Activated T-helper 1 cell treated with anti-CD3 and anti-CD28 coated beads, Interleukin-12 subunit alpha, Interleukin-12 subunit beta, Interleukin-2, Interleukin-4 antibody, amounts not matched to agents 30 ng/mL and 10 ng/mL and 1 ng/mL, durations not matched to agents 14 hours and 24 hours and 36 hours (primary cell): ENCODE measurements at regions of chr13 and their contacts with region 1.

Region 1: DNA sequence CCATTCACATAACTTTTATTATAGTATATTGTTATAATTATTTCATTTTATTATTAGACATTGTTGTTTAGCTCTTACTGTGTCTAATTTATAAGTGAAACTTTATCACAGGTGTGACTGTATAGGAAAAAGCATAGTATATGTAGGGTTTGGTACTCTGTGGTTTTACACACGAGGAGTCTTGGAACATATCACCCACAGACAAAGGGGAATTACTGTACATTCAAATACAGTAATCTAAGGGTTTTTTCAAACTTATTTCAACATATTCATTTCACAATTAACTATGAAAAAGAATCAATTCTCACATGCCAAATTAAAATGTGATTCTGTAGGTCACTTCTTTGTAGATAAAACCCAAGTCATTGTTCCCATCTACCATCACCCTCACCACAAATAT is 46.0 kb downstream of the RBM26 start:
- DNase-seq: no peak
- H3K4me3 Mint-ChIP-seq: no peak overlapping the region
- H3K27ac Mint-ChIP-seq: peak overlapping the region; percentile 57
- H3K4me1 Mint-ChIP-seq: peaks cover 34% of the 10 kb centered on the region
- H3K27me3 Mint-ChIP-seq: no peaks in the 10 kb centered on the region

Region 2: DNA sequence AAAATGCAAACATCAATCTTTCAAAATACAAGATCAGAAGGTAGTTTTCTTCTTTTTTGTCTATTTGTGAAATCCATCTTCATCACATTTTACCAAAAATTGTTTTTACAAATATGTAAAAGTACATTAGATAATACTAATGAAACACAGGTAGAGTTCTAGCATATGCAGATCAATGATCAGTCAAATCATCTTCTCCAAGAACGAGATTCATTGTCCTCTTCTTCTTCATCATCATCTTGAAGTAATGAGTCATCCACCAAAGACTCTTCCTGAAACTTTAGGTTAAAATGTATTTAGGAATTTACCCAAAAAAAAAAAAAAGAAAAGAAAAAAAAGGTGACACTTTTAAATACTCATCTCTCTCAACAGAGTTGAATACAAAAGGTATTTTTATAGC is 39.7 kb before region 1 on chr13:
- intact Hi-C with region 1: loop called (anchors 5 kb)
- DNase-seq: no peak
- H3K4me3 Mint-ChIP-seq: no peak overlapping the region
- H3K27ac Mint-ChIP-seq: no peak overlapping the region
- H3K4me1 Mint-ChIP-seq: peaks cover 5% of the 10 kb centered on the region
- H3K27me3 Mint-ChIP-seq: no peaks in the 10 kb centered on the region

Region 3: DNA sequence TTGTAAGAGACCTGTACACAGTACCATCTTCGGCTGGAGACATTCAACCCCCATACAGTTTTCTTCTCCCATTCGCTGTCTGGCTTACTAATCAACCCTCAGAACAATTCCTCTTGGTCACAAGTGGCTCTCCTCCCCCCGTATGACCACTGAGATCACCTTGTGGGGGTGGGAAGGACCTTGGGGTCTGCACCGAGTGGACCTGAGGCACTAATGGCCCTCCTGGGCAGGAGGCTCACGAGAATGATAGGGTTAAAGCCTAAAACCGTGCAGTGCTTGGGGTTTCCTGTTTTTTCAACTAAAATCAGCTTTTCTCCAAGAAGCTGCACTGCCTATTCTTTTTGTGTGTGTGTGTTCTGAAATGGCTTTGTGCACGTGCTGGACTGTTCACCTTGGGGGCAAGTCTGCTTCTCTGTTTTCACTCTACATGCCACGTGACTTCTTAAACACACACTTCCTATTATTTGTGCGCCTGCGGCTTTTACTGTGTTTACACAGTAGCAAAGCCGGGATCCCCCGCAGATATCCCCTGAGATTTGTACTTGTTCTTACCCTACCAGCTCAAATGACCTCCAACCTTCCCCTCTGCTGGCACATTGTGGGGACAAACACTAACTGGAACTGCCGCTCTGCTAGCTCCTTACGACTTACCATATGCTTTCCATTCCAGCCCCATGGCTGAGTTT is 33.6 kb after region 1 on chr13:
- intact Hi-C with region 1: loop called (anchors 1 kb)
- DNase-seq: no peak
- H3K4me3 Mint-ChIP-seq: peak overlapping the region; percentile 64
- H3K27ac Mint-ChIP-seq: peak overlapping the region; percentile 60
- H3K4me1 Mint-ChIP-seq: peaks cover 62% of the 10 kb centered on the region
- H3K27me3 Mint-ChIP-seq: no peaks in the 10 kb centered on the region

Region 4: DNA sequence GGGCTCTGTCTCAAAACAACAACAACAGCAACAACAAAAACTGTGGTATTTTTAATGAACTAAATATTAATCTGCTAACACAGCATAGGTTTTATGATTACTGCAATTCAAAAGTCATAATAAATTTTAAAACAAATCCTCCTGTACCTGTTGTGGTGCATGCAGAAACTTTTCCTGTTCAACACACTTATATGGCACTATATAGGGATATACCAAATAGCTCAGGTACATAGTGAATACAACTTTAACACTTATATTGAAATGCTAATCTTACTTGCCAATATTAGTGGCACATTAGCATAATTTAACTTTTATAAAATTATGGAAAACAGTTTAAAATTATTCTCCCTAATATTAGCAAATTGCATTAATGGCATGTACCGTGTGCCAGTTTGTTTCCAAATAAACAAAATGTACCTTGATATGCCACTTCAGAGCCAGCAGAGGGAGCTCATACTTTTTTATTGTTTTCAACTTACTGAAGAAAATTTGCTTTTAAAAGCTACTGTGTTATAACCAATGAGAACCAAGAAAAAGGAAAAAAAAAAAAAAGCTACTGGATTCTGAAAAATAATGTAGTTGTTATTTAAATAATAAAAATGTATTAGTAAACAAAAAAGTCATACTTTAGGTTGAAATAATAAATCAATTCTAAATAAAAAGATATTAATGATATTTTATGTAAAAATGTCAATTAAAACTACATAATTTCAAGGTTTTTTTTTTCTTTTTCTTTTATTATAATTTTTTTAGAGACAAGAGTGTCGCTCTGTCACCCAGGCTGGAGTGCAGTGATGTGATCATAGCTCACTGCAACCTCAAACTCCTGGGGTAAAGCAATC is 63.9 kb after region 1 on chr13:
- intact Hi-C with region 1: no loop called
- DNase-seq: no peak
- H3K4me3 Mint-ChIP-seq: no peak overlapping the region
- H3K27ac Mint-ChIP-seq: no peak overlapping the region
- H3K4me1 Mint-ChIP-seq: peaks cover 35% of the 10 kb centered on the region
- H3K27me3 Mint-ChIP-seq: no peaks in the 10 kb centered on the region